Motor neuron (in vitro differentiated cells): ENCODE measurements at regions of chr11 and their contacts with region 1.

Region 1: DNA sequence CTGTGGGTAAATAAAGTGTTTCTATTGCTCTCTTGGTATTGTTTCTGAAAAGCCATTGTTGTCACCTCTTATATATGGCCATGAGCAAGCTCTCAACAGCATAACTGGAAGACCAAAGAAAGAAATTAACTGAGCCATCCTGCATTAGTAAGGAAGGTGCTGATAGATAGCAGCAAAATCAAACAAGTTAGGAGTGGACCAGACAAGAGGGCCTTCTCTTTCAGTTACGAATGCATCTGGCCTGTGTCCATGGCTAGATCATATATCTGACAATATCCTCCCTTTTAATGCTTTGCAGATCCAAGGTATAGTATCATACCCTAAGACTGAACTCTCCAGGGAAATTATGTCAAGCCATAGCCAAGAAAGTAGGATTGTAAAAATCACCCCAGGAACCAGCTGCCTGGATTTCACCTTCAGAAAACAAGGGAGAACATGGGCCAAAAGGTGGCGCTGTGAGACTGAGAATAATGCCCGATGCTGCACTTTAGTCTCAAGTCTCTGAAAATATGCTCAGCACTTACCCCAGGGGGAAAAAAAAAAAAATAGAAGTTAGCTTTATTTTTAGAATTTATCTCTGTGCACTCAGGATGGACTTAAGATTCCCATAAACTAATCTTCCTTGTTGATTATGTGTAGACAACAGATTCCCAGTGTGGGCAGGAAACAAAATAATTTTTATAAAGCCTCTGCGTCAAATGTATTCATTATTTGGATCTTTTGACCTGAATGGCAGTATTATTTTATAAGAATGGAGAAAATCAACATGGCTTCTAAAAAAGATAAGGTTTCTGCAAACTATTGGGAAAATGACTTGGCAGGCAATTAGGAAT is 415.1 kb downstream of the ETS1 start:
- ATAC-seq: peak; percentile 63 to 83 (median 74)
- H3K4me3 ChIP-seq: no peak overlapping the region
- H3K27ac ChIP-seq: no peak overlapping the region
- H3K4me1 ChIP-seq: peaks cover 3 to 8% of the 10 kb centered on the region in 2 donors

Region 2: GRCh38 chr11:128018692-128019091 is 153.6 kb before region 1 on chr11:
- in situ Hi-C with region 1: no loop called
- ATAC-seq: no peak
- H3K4me3 ChIP-seq: no peak overlapping the region
- H3K27ac ChIP-seq: no peak overlapping the region
- H3K4me1 ChIP-seq: peaks cover 4 to 6% of the 10 kb centered on the region in 2 donors

Region 3: DNA sequence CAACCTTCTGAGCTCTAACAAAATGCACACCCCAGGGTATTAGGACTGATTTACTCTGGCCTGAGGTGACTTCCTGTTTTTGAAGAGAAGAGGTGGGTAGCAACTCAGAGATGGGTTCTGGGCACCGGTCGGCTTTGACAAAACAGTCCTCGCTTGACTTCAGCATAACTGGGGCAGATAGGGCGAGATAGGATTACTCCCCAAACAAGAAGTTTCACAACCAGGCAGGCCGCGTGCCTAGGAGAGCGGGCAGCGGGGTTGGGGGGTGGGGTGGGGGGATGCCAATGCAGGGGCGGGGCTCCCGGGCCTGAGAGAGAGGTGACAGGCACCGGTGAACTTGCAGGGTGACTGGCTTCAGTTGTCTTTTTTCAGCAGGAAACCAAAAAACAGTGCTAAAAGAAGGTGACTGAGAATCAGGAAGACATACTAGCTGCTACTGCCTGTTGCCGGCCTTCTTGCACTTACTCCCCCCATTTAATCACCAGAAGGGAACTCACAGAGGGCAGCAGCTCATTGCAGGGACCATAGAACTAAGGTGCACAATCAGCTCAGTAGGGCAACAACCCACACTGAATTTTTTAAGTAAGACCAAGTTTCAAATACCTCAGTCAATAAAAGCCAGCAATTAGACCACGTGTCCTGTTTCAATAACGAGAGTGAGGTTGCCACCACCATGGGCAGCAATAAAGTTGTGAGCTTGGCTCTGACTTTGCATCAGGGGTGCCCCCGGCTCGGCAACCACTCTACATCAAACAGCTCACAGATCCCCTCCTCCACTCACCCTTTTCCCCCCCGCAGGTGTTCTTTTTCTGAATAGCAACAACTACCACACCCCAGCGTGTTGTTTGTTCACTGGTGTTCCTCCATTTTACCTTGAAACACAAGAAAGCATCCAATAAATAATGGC is 452.3 kb after region 1 on chr11:
- in situ Hi-C with region 1: loop called in 4 of 9 experiments (anchors 10 to 25 kb)
- ATAC-seq: no peak
- H3K4me3 ChIP-seq: no peak overlapping the region
- H3K27ac ChIP-seq: no peak overlapping the region
- H3K4me1 ChIP-seq: peaks cover 0 to 11% of the 10 kb centered on the region in 2 donors

Region 4: GRCh38 chr11:128848815-128849455 is 676.7 kb after region 1 on chr11:
- in situ Hi-C with region 1: loop called in 8 of 9 experiments (anchors 10 to 25 kb)
- ATAC-seq: peak in 3 of 8 experiments; percentile 81 to 92 (median 85)
- H3K4me3 ChIP-seq: no peak overlapping the region
- H3K27ac ChIP-seq: no peak overlapping the region
- H3K4me1 ChIP-seq: no peaks in the 10 kb centered on the region